Cardiac septum (tissue), 1 donor: ENCODE measurements at regions of chr13 and their contacts with region 1.

Region 1: GRCh38 chr13:30306762-30307193 is 573 bp downstream of the KATNAL1 start:
- DNase-seq: peak; percentile 96

Region 2: GRCh38 chr13:29266261-29266660 is 1040.5 kb before region 1 on chr13:
- intact Hi-C with region 1: no loop called
- DNase-seq: no peak

Region 3: GRCh38 chr13:29978211-29978610 is 328.6 kb before region 1 on chr13:
- intact Hi-C with region 1: no loop called
- DNase-seq: no peak

Region 4: GRCh38 chr13:30114571-30115256 is 192.1 kb before region 1 on chr13:
- intact Hi-C with region 1: no loop called
- DNase-seq: peak; percentile 94

Region 5: GRCh38 chr13:30341815-30342570 is 35.2 kb after region 1 on chr13:
- intact Hi-C with region 1: loop called (anchors 2 kb)
- DNase-seq: peak; percentile 85

Region 6: GRCh38 chr13:30422054-30422839 is 115.5 kb after region 1 on chr13 and contains the start of gene UBE2L5:
- intact Hi-C with region 1: loop called (anchors 10 kb)
- DNase-seq: peak; percentile 91
- total RNA-seq, gene UBE2L5: not detected